ENCODE measurements at regions of chr22 and their contacts with region 1.

Region 1: GRCh38 chr22:19730655-19731360 is 7.5 kb downstream of the GP1BB start:
- DNase-seq: peak in 1 of 2 experiments; percentile 97
- H3K4me3 ChIP-seq: peak overlapping the region in 3 of 4 experiments; percentile 13 to 49 (median 29); a peak in 4 of 8 replicates
- H3K27ac ChIP-seq: no peak overlapping the region
- H3K4me1 ChIP-seq: peaks cover 0 to 4% (median 2%) of the 10 kb centered on the region in 4 experiments; a peak in 2 of 7 replicates
- H3K27me3 ChIP-seq: peaks cover 16 to 46% (median 40%) of the 10 kb centered on the region in 4 experiments
- CTCF ChIP-seq: peak; percentile 92 to 94 (median 94)
- EP300 ChIP-seq: no peak
- POLR2A ChIP-seq: no peak
- RAD21 ChIP-seq: peak; percentile 96 to 98

Region 2: DNA sequence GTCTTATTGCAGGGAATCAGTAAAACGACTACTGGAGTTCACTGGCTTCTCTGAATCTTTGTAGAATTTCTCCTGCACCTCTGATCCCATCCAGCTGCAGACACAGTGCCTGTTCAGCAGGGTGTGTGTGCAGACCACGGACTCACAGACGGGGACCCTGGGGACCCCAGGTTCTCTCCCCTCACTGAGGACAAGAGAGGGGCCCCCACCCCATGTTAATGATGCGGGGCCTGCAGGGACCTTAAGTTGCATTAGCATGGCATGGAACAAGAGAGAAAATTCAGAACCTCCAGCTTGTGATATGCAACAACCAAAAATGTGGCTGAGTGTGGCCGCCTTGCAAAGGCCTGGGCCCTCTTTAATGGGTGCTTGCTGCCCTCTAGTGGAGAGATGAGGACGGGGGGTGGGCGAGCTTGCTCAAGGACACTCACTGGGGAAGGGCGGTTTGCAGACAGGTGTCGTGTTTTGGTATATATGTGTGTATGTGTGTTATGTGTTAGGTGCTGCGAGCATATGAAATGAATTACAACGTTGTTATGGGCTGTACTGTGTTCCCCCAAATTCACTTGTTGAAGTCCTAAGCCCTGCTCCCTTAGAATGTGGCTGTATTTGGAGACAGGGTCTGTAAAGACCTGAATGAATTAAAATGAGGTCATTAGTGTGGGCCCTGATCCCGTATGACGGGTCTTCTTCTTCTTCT is 100.9 kb before region 1 on chr22:
- CTCF ChIA-PET with region 1: no interaction called
- POLR2A ChIA-PET with region 1: no interaction called
- DNase-seq: peak; percentile 60 to 94
- H3K4me3 ChIP-seq: no peak overlapping the region
- H3K27ac ChIP-seq: no peak overlapping the region
- H3K4me1 ChIP-seq: peaks cover 0 to 10% (median under 1%) of the 10 kb centered on the region in 4 experiments; a peak in 3 of 7 replicates
- H3K27me3 ChIP-seq: no peaks in the 10 kb centered on the region
- CTCF ChIP-seq: peak; percentile 87 to 96 (median 93)
- EP300 ChIP-seq: no peak
- POLR2A ChIP-seq: no peak
- RAD21 ChIP-seq: peak; percentile 96 to 99

Region 3: GRCh38 chr22:19717691-19718455 is 12.9 kb before region 1 on chr22:
- CTCF ChIA-PET with region 1: interaction called, 17 read pairs
- POLR2A ChIA-PET with region 1: no interaction called
- DNase-seq: peak in 1 of 2 experiments; percentile 92
- H3K4me3 ChIP-seq: peak overlapping the region; percentile 0 to 65 (median 36); a peak in 6 of 8 replicates
- H3K27ac ChIP-seq: no peak overlapping the region
- H3K4me1 ChIP-seq: peaks cover 0 to 30% (median 18%) of the 10 kb centered on the region in 4 experiments; a peak in 5 of 7 replicates
- H3K27me3 ChIP-seq: peaks cover 47 to 96% (median 80%) of the 10 kb centered on the region in 4 experiments
- CTCF ChIP-seq: peak; percentile 76 to 94 (median 78)
- EP300 ChIP-seq: no peak
- POLR2A ChIP-seq: no peak
- RAD21 ChIP-seq: peak; percentile 66 to 84

Region 4: DNA sequence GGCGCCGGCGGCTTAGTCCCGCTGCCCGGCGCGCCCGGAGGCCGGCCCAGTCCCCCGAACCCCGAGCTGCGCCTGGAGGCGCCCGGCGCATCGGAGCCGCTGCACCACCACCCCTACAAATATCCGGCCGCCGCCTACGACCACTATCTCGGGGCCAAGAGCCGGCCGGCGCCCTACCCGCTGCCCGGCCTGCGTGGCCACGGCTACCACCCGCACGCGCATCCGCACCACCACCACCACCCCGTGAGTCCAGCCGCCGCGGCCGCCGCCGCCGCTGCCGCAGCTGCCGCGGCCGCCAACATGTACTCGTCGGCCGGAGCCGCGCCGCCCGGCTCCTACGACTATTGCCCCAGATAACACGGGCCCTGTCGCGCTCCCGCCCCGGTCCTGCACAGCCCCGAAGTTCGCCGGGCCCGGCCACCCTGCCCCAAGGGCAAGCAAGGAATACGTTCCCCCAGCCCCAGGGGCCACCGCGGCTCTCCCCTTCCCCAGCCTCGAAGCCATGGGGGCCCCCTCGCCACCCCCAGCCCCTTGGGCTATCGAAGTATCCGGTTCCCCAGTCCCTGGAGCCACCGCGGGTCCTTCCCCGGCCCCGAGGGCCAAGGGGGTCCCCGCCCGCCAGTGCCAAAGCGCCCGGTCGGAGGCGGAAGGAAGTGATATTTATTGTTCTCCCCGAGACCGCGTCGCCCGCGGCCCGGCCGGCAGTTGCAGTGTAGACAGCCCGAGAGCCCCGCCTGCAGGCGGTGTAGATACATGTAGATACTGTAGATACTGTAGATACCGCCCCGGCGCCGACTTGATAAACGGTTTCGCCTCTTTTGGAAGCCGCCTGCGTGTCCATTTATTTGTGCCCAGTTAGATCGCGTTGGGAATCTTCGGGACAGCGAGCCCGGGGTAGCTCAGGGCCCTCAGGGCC is 36.0 kb after region 1 on chr22:
- CTCF ChIA-PET with region 1: interaction called, 48 read pairs
- POLR2A ChIA-PET with region 1: interaction called, 3 read pairs
- DNase-seq: peak in 1 of 2 experiments; percentile 87
- H3K4me3 ChIP-seq: peak overlapping the region in 2 of 4 experiments; percentile 6 to 44; a peak in 3 of 8 replicates
- H3K27ac ChIP-seq: no peak overlapping the region
- H3K4me1 ChIP-seq: peaks cover 0 to 45% (median 32%) of the 10 kb centered on the region in 4 experiments; a peak in 6 of 7 replicates
- H3K27me3 ChIP-seq: peaks cover 79 to 95% (median 93%) of the 10 kb centered on the region in 4 experiments
- CTCF ChIP-seq: peak; percentile 29 to 52 (median 39)
- EP300 ChIP-seq: no peak
- POLR2A ChIP-seq: no peak
- RAD21 ChIP-seq: peak; percentile 46 to 49

Region 5: DNA sequence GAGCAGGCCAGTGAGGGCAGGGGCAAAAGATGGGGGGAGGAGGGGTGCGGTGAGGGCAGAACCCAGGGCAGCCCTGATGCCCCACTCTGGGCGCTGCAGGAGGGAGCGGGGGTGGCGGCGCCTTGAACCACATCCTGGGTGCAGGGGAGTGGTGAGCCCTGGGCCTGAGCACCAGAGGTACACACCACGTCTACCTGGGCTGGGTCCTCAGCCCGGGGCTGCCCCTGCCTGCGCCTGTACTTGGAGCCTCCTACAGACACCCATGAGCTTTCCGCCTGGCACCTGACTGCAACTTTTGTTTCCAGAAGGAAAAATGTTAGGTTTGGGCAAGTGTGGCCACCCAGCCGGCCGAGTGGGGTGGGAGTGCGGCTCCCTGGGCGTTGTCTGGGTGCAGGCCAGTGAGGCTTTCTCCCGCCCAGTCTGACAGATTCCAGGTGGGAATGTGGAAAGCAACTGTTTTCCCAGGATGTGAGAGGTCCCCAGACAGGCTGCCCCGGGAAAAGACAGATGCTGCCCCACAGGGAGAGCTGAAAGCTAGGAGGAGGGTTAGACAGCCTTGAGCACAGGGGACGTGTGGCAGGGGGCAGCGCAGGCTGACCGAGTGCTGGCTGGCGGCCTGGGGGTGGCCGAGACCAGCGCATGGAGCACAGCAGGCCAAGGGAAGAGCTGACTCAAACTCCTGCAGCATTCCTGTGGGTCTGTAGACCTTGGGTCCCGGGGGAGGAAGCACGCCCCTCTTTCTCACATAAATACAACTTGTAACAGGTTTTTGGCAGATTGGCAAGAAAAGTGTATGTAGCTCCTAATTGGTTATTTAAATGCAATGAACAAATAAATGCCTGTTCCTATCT is 79.8 kb after region 1 on chr22:
- CTCF ChIA-PET with region 1: interaction called, 12 read pairs
- POLR2A ChIA-PET with region 1: no interaction called
- DNase-seq: no peak
- H3K4me3 ChIP-seq: no peak overlapping the region
- H3K27ac ChIP-seq: no peak overlapping the region
- H3K4me1 ChIP-seq: no peaks in the 10 kb centered on the region; a peak in 1 of 7 replicates
- H3K27me3 ChIP-seq: no peaks in the 10 kb centered on the region
- CTCF ChIP-seq: no peak
- EP300 ChIP-seq: no peak
- POLR2A ChIP-seq: no peak
- RAD21 ChIP-seq: no peak; a peak in 2 of 4 replicates

Region 6: GRCh38 chr22:19909350-19910179 is 178.8 kb after region 1 on chr22:
- CTCF ChIA-PET with region 1: interaction called, 145 read pairs
- POLR2A ChIA-PET with region 1: interaction called, 3 read pairs
- DNase-seq: peak; percentile 44 to 90
- H3K4me3 ChIP-seq: no peak overlapping the region
- H3K27ac ChIP-seq: peak overlapping the region; percentile 40
- H3K4me1 ChIP-seq: no peaks in the 10 kb centered on the region; a peak in 2 of 7 replicates
- H3K27me3 ChIP-seq: no peaks in the 10 kb centered on the region
- CTCF ChIP-seq: peak; percentile 90 to 94 (median 93)
- EP300 ChIP-seq: no peak
- POLR2A ChIP-seq: no peak
- RAD21 ChIP-seq: peak; percentile 97 to 98